CD8-positive, alpha-beta memory T cell (primary cell): ENCODE measurements at regions of chr5 and their contacts with region 1.

Region 1: GRCh38 chr5:151157426-151158286 is at the start of gene ANXA6:
- DNase-seq: peak; percentile 59 to 80 (median 67)
- H3K4me3 ChIP-seq: peak within 1 kb of the TSS; percentile 86
- H3K4me3 Mint-ChIP-seq: peak within 1 kb of the TSS; percentile 96 to 99 (median 97)
- H3K27ac ChIP-seq: peak within 1 kb of the TSS; percentile 70
- H3K27ac Mint-ChIP-seq: peak within 1 kb of the TSS; percentile 86 to 99 (median 94)
- H3K4me1 ChIP-seq: peaks cover 48% of the 10 kb centered on the region
- H3K4me1 Mint-ChIP-seq: peaks cover 52 to 59% (median 58%) of the 10 kb centered on the region in 3 donors
- H3K27me3 ChIP-seq: no peaks in the 10 kb centered on the region
- H3K27me3 Mint-ChIP-seq: peaks cover 0 to 2% of the 10 kb centered on the region in 2 donors
- total RNA-seq, gene ANXA6: 452 to 459 TPM

Region 2: DNA sequence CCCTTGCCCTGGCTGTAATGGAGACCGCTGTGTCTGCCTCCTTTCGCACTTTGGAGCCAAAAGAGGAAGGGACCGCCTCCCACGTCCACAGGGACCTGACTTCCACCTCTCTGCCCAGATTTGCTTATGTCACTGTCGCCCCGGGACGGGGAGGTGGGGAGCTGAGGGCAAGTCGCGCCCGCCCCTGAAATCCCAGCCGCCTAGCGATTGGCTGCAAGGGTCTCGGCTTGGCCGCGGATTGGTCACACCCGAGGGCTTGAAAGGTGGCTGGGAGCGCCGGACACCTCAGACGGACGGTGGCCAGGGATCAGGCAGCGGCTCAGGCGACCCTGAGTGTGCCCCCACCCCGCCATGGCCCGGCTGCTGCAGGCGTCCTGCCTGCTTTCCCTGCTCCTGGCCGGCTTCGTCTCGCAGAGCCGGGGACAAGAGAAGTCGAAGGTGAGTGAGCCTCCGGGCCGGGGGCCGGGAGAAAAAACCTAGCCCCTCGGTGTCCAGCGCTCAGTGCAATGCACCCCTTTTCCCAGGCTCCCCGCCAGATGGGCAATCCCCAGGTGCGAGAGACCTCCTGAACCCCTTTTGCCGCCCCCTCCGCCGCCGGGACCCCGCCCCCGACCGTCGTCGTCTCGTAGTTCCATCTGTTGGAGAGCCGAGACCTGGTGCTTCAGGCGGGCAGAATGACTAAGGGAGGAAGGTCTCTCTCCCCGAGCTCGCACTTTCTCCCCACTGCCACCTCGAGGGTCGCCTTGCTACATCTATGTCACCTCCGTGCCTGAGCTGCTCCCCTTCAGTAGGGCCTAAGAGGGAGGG is 137.1 kb before region 1 on chr5 and contains the start of gene GPX3:
- CTCF ChIA-PET with region 1: no interaction called
- POLR2A ChIA-PET with region 1: no interaction called
- DNase-seq: peak in 1 of 5 donors; percentile 25
- H3K4me3 ChIP-seq: peak within 1 kb of the TSS; percentile 9
- H3K4me3 Mint-ChIP-seq: peak within 1 kb of the TSS in 6 of 7 donors; percentile 60 to 78 (median 70)
- H3K27ac ChIP-seq: no peak within 1 kb of the TSS
- H3K27ac Mint-ChIP-seq: peak within 1 kb of the TSS in 6 of 8 donors; percentile 21 to 83 (median 42)
- H3K4me1 ChIP-seq: peaks cover 10% of the 10 kb centered on the region
- H3K4me1 Mint-ChIP-seq: peaks cover 26 to 48% (median 40%) of the 10 kb centered on the region in 3 donors
- H3K27me3 ChIP-seq: no peaks in the 10 kb centered on the region
- H3K27me3 Mint-ChIP-seq: peaks cover 0 to 1% of the 10 kb centered on the region in 2 donors
- total RNA-seq, gene GPX3: not detected

Region 3: DNA sequence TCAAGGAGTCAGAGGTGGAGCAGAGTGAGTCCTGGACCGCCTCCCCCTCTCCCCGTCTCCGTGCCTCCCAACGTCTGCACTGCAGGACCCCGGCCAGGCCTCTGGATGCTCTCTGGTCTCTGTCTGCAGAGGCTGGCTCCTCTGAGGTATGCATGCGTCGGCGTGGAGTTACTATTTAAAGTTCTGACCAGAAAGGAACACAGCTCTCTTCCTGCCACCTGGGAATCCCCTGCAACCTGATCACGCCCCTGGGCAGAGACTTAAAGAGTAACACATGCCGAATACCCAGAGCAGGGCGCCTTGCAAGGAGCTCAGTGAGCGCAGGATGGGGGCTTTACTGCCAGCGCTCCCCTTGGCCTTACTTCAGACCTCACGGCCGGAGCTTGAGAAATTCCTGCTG is 16.1 kb before region 1 on chr5:
- CTCF ChIA-PET with region 1: interaction called, 153 read pairs
- POLR2A ChIA-PET with region 1: interaction called, 4 read pairs
- DNase-seq: peak; percentile 39 to 80 (median 45)
- H3K4me3 ChIP-seq: peak overlapping the region; percentile 35
- H3K4me3 Mint-ChIP-seq: peak overlapping the region; percentile 40 to 89 (median 82)
- H3K27ac ChIP-seq: peak overlapping the region; percentile 38
- H3K27ac Mint-ChIP-seq: peak overlapping the region; percentile 92 to 97 (median 93)
- H3K4me1 ChIP-seq: peaks cover 88% of the 10 kb centered on the region
- H3K4me1 Mint-ChIP-seq: peaks cover 92 to 100% (median 97%) of the 10 kb centered on the region in 3 donors
- H3K27me3 ChIP-seq: no peaks in the 10 kb centered on the region
- H3K27me3 Mint-ChIP-seq: no peaks in the 10 kb centered on the region

Region 4: DNA sequence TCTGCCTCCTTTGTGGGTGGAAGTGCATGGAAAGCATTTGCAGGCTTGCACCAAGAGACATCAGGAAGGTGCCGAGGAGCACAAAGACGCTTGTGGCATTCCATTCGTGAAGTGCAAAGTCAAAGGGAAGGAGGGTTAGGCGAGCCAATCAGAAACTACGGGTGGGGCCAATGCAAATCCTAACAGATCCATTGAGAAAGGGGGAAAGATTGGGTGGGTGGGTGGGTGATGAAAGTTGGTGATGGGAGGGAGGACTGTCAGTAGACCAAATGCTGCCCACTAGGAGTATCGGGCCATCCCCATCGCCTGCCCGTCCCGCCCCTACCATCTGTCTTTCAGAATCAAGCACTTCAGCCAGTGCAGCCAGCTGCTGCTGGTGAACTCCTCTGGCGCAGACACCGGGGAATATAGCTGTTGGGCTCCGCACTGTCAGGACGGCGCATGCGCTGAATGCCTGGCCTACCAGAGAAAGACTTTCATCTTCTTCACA is 17.0 kb after region 1 on chr5:
- CTCF ChIA-PET with region 1: no interaction called
- POLR2A ChIA-PET with region 1: no interaction called
- DNase-seq: no peak
- H3K4me3 ChIP-seq: no peak overlapping the region
- H3K4me3 Mint-ChIP-seq: no peak overlapping the region
- H3K27ac ChIP-seq: no peak overlapping the region
- H3K27ac Mint-ChIP-seq: peak overlapping the region in 3 of 8 donors; percentile 59 to 88 (median 64)
- H3K4me1 ChIP-seq: no peaks in the 10 kb centered on the region
- H3K4me1 Mint-ChIP-seq: peaks cover 10 to 19% (median 12%) of the 10 kb centered on the region in 3 donors
- H3K27me3 ChIP-seq: no peaks in the 10 kb centered on the region
- H3K27me3 Mint-ChIP-seq: no peaks in the 10 kb centered on the region

Region 5: DNA sequence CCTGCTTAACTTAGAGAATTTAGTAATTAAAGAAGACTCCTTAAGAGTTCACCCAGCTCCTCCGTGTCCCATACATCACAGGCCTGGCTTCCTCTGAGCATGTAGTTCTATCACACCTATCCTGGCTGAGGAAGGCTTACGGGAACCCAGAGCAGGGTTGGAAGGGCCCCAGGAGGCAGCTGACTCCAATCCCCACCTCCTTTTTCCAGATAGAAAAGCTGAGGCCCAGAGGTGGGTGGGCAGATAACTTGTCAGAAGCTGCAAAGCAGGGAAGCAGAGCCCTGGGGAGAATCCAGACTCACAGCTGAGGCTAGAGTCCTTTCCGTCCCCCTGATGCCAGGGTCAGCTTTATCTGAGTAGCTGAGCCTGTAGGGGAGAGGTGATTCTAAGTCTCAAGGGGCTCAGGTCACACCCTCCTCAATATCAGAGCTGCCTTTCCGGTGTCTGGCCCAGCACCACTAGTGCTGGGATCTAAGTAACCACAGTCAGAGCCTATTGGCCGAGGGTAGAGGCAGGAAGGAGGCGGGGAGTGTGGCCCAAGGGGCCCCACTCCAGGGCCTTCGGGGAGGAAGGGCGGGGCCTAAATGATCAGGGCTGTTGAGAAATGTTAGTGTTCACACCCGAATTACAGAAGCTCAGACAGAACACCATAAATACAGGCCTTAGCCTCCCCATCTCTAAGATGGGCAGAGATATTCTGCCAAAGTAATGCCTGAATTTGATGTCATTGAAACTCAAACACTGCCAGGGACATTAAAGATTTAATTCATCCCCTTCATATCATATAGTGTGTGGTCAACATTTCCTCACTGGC is 56.4 kb after region 1 on chr5:
- CTCF ChIA-PET with region 1: interaction called, 10 read pairs
- POLR2A ChIA-PET with region 1: interaction called, 3 read pairs
- DNase-seq: peak; percentile 75 to 93 (median 83)
- H3K4me3 ChIP-seq: peak overlapping the region; percentile 85
- H3K4me3 Mint-ChIP-seq: peak overlapping the region; percentile 83 to 95 (median 93)
- H3K27ac ChIP-seq: peak overlapping the region; percentile 91
- H3K27ac Mint-ChIP-seq: peak overlapping the region; percentile 91 to 99 (median 98)
- H3K4me1 ChIP-seq: peaks cover 95% of the 10 kb centered on the region
- H3K4me1 Mint-ChIP-seq: peaks cover 82 to 95% (median 90%) of the 10 kb centered on the region in 3 donors
- H3K27me3 ChIP-seq: no peaks in the 10 kb centered on the region
- H3K27me3 Mint-ChIP-seq: peaks cover 0 to 2% of the 10 kb centered on the region in 2 donors